Mucosa of descending colon (tissue), 3 donors: ENCODE measurements at regions of chr15 and their contacts with region 1.

Region 1: GRCh38 chr15:64046347-64047153 is at the start of gene DAPK2:
- DNase-seq: peak; percentile 82 to 87 (median 83)
- ATAC-seq: peak; percentile 90
- H3K4me3 ChIP-seq: peak within 1 kb of the TSS; percentile 57
- H3K4me1 ChIP-seq: peaks cover 5% of the 10 kb centered on the region
- CTCF ChIP-seq: peak; percentile 85
- total RNA-seq, gene DAPK2: 32.0 to 82.0 (median 35.5) TPM

Region 2: DNA sequence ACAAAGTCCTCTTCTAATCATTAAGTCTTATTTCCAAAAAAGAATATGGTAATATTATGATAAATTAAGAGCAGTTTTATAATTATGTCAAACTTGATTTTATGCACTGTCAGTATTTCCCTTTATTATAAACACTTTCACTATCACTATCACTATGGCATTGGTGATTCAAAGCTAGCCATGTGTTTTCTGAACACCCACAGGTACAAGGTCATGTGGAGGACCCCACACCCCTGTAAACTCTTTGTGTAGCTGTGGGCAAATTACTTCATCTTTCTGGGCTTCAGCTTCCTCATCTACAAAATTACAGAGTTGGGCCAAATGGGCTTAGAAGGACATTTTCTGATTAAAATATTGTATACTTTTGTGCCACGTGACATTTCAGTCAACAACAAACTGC is 407.7 kb before region 1 on chr15:
- intact Hi-C with region 1: no loop called
- DNase-seq: no peak
- ATAC-seq: no peak
- H3K4me3 ChIP-seq: no peak overlapping the region
- H3K4me1 ChIP-seq: no peaks in the 10 kb centered on the region
- CTCF ChIP-seq: no peak

Region 3: GRCh38 chr15:63939531-63940130 is 106.9 kb before region 1 on chr15:
- intact Hi-C with region 1: loop called (anchors 5 to 10 kb)
- DNase-seq: peak in 1 of 3 donors; percentile 44
- ATAC-seq: peak; percentile 70
- H3K4me3 ChIP-seq: no peak overlapping the region
- H3K4me1 ChIP-seq: peaks cover 5% of the 10 kb centered on the region
- CTCF ChIP-seq: no peak

Region 4: GRCh38 chr15:63945007-63945788 is 101.4 kb before region 1 on chr15:
- intact Hi-C with region 1: loop called (anchors 5 to 10 kb)
- DNase-seq: peak; percentile 73 to 90 (median 86)
- ATAC-seq: peak; percentile 93
- H3K4me3 ChIP-seq: no peak overlapping the region
- H3K4me1 ChIP-seq: no peaks in the 10 kb centered on the region
- CTCF ChIP-seq: peak; percentile 91

Region 5: DNA sequence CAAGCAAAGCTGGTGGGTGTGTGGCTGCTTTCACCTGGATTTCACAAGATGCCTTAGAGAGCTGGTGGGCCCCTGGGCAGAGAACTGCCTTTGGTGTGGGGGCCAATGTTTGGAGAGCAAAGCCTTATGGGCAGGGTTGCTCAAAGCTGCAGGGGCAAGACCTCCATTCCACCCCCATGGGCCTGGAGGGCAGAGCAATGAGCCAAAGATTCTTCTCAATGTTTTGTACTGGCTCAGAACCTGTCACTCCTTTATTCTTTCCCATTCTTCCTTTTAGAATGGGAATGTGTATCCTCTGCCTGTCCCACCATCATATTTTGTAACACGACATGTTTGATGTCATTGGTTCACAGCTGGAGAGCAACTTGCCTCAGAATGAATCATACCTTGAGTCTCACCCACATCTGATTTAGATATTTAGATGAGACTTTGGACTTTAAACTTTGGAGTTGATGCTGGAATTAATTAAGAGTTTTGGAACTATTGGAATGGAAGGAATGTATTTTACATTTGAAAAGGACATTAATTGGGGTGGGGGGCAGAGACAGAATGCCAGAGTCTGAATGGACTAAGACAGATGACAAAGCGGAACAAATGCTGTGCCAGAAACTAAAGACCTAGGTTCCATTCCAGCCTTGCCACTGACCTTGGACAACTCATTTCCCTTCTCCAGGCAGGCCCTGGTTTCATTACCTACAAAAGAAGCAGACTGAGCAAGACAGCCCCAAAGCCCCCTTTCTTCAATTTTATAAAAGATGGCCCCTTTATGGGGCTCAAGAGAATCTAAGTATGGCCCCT is 73.1 kb before region 1 on chr15:
- intact Hi-C with region 1: no loop called
- DNase-seq: peak in 1 of 3 donors; percentile 1
- ATAC-seq: no peak
- H3K4me3 ChIP-seq: no peak overlapping the region
- H3K4me1 ChIP-seq: peaks cover 42% of the 10 kb centered on the region
- CTCF ChIP-seq: no peak

Region 6: GRCh38 chr15:64197425-64197824 is 150.9 kb after region 1 on chr15:
- intact Hi-C with region 1: no loop called
- DNase-seq: no peak
- ATAC-seq: no peak
- H3K4me3 ChIP-seq: no peak overlapping the region
- H3K4me1 ChIP-seq: no peaks in the 10 kb centered on the region
- CTCF ChIP-seq: no peak